T-cell (primary cell): ENCODE measurements at regions of chr18 and their contacts with region 1.

Region 1: DNA sequence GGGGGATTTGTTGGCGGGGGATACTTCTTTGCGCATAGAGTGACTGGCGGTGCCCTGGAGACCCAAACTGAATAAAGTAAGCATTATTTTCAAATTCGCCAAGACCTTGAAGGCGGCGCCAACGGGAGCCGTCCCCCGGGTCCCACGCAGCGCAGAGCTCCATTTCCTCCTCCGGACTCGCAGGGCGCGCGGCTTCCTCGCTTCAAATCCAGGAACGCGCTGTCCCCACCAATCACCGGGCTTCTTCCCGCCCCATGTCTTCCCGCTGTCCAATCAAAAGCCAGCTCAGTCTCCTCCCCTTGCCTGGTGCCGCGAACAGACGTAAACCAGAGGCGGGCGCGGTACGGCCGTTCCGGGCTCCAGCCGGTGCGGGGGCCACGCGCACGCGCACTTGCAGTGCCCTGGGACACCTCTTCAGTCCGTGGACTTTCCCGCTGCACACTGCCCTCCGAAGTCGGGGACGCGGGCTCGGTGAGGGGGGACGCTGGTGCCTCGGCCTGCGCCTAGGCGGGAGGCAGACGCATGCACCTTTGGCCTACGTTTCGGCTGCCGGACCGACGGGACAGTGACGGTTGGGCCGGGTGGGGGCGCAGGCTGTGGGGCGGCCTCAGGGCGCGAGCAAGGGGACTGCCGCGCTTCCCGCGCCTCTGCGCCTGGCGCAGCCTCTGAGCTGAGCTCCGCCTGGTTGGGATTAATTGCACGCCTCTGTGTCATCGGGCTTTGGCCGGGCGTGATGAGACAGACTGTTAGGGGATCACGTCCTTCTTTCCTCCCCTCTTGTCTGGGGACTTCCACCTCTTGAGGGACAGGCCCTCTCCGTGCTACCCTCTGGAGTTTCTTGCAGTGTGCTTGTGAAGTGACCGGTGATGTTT is at the start of gene CEP192:
- DNase-seq: peak; percentile 93 to 99 (median 97)
- ATAC-seq: peak; percentile 94 to 99 (median 96)
- H3K4me3 ChIP-seq: peak within 1 kb of the TSS; percentile 62 to 99
- H3K4me3 Mint-ChIP-seq: peak within 1 kb of the TSS; percentile 93 to 100 (median 94)
- H3K27ac ChIP-seq: peak within 1 kb of the TSS; percentile 55
- H3K27ac Mint-ChIP-seq: peak within 1 kb of the TSS; percentile 92 to 93
- H3K4me1 ChIP-seq: peaks cover 14 to 24% of the 10 kb centered on the region in 2 experiments
- H3K4me1 Mint-ChIP-seq: peaks cover 14 to 19% (median 16%) of the 10 kb centered on the region in 3 donors
- H3K27me3 ChIP-seq: no peaks in the 10 kb centered on the region
- H3K27me3 Mint-ChIP-seq: no peaks in the 10 kb centered on the region
- total RNA-seq, gene CEP192: 28.9 to 37.2 (median 32.9) TPM

Region 2: GRCh38 chr18:12948042-12948804 is 43.0 kb before region 1 on chr18:
- CTCF ChIA-PET with region 1: interaction called, 5 to 6 read pairs
- POLR2A ChIA-PET with region 1: interaction called, 3 to 14 read pairs
- DNase-seq: peak; percentile 95 to 98 (median 98)
- ATAC-seq: peak; percentile 82 to 87 (median 84)
- H3K4me3 ChIP-seq: peak overlapping the region in 1 of 2 donors; percentile 60
- H3K4me3 Mint-ChIP-seq: peak overlapping the region; percentile 92 to 98 (median 97)
- H3K27ac ChIP-seq: peak overlapping the region; percentile 91
- H3K27ac Mint-ChIP-seq: peak overlapping the region; percentile 94 to 96
- H3K4me1 ChIP-seq: peaks cover 11 to 31% of the 10 kb centered on the region in 2 experiments
- H3K4me1 Mint-ChIP-seq: peaks cover 37 to 50% (median 44%) of the 10 kb centered on the region in 3 donors
- H3K27me3 ChIP-seq: no peaks in the 10 kb centered on the region
- H3K27me3 Mint-ChIP-seq: no peaks in the 10 kb centered on the region

Region 3: GRCh38 chr18:12960853-12961397 is 30.3 kb before region 1 on chr18:
- CTCF ChIA-PET with region 1: no interaction called
- POLR2A ChIA-PET with region 1: interaction called in 1 of 2 experiments, 10 read pairs
- DNase-seq: no peak
- ATAC-seq: no peak
- H3K4me3 ChIP-seq: no peak overlapping the region
- H3K4me3 Mint-ChIP-seq: no peak overlapping the region
- H3K27ac ChIP-seq: no peak overlapping the region
- H3K27ac Mint-ChIP-seq: no peak overlapping the region
- H3K4me1 ChIP-seq: no peaks in the 10 kb centered on the region
- H3K4me1 Mint-ChIP-seq: peaks cover 12 to 14% (median 13%) of the 10 kb centered on the region in 3 donors
- H3K27me3 ChIP-seq: no peaks in the 10 kb centered on the region
- H3K27me3 Mint-ChIP-seq: no peaks in the 10 kb centered on the region

Region 4: DNA sequence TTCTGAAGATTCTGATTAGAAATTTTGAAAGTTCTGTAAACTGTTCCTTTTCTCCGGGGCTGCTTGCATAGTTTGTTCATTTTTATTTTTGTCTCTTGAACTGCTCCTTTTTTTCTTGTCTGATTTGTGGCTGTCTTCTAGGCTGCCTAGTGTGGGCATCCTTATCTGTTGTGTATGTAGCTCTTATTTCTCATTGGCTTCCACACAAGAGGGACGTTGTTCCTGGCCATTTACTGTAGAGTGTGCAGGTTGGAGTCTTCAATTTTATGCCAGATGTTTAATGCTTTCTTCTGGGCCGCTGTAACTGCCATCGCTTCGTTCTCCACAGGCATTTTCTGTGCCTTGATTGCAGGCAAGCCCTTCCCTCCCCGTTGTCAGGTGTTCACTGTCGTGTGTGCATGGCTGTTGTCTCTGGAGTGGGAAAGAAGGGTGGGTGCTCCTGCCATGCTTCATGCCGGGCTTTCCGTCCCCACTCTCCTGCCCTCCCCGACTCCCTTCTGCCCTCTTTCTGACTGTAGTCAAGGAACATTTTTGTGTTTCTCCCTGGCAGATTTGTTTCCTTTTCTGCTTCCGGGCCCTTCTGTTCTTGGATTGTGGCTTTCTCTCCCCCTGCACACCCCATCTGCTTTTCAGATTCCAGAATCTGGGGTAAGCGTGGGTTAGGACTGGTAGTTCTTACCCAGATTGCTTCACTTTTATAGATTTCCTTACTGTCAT is 15.5 kb after region 1 on chr18:
- CTCF ChIA-PET with region 1: no interaction called
- POLR2A ChIA-PET with region 1: no interaction called
- DNase-seq: no peak
- ATAC-seq: no peak
- H3K4me3 ChIP-seq: no peak overlapping the region
- H3K4me3 Mint-ChIP-seq: no peak overlapping the region
- H3K27ac ChIP-seq: no peak overlapping the region
- H3K27ac Mint-ChIP-seq: no peak overlapping the region
- H3K4me1 ChIP-seq: no peaks in the 10 kb centered on the region
- H3K4me1 Mint-ChIP-seq: peaks cover 7 to 22% (median 14%) of the 10 kb centered on the region in 3 donors
- H3K27me3 ChIP-seq: no peaks in the 10 kb centered on the region
- H3K27me3 Mint-ChIP-seq: no peaks in the 10 kb centered on the region

Region 5: GRCh38 chr18:13070460-13070859 is 79.3 kb after region 1 on chr18:
- CTCF ChIA-PET with region 1: no interaction called
- POLR2A ChIA-PET with region 1: no interaction called
- DNase-seq: no peak
- ATAC-seq: no peak
- H3K4me3 ChIP-seq: no peak overlapping the region
- H3K4me3 Mint-ChIP-seq: no peak overlapping the region
- H3K27ac ChIP-seq: no peak overlapping the region
- H3K27ac Mint-ChIP-seq: no peak overlapping the region
- H3K4me1 ChIP-seq: peaks cover 0 to 3% of the 10 kb centered on the region in 2 experiments
- H3K4me1 Mint-ChIP-seq: peaks cover 9 to 18% (median 14%) of the 10 kb centered on the region in 3 donors
- H3K27me3 ChIP-seq: no peaks in the 10 kb centered on the region
- H3K27me3 Mint-ChIP-seq: no peaks in the 10 kb centered on the region

Region 6: GRCh38 chr18:13175754-13176210 is 184.6 kb after region 1 on chr18:
- CTCF ChIA-PET with region 1: no interaction called
- POLR2A ChIA-PET with region 1: no interaction called
- DNase-seq: no peak
- ATAC-seq: no peak
- H3K4me3 ChIP-seq: no peak overlapping the region
- H3K4me3 Mint-ChIP-seq: no peak overlapping the region
- H3K27ac ChIP-seq: no peak overlapping the region
- H3K27ac Mint-ChIP-seq: no peak overlapping the region
- H3K4me1 ChIP-seq: peaks cover 0 to 5% of the 10 kb centered on the region in 2 experiments
- H3K4me1 Mint-ChIP-seq: peaks cover 0 to 10% (median 8%) of the 10 kb centered on the region in 3 donors
- H3K27me3 ChIP-seq: peaks cover 0 to 3% of the 10 kb centered on the region in 2 experiments
- H3K27me3 Mint-ChIP-seq: no peaks in the 10 kb centered on the region